K562 (cell line): ENCODE measurements at regions of chr7 and their contacts with region 1.

Region 1: GRCh38 chr7:87445897-87446296 is 29.6 kb downstream of the ABCB4 start:
- DNase-seq: no peak
- ATAC-seq: no peak
- H3K4me3 ChIP-seq: no peak overlapping the region
- H3K27ac ChIP-seq: no peak overlapping the region
- H3K4me1 ChIP-seq: no peaks in the 10 kb centered on the region
- H3K27me3 ChIP-seq: no peaks in the 10 kb centered on the region
- CTCF ChIP-seq: no peak
- EP300 ChIP-seq: no peak
- POLR2A ChIP-seq: no peak
- RAD21 ChIP-seq: no peak

Region 2: GRCh38 chr7:86748843-86749719 is 696.8 kb before region 1 on chr7:
- CTCF ChIA-PET with region 1: no interaction called
- POLR2A ChIA-PET with region 1: no interaction called
- in situ Hi-C with region 1: no loop called
- intact Hi-C with region 1: loop called (anchors 10 kb)
- DNase-seq: no peak
- ATAC-seq: no peak
- H3K4me3 ChIP-seq: no peak overlapping the region
- H3K27ac ChIP-seq: no peak overlapping the region
- H3K4me1 ChIP-seq: no peaks in the 10 kb centered on the region
- H3K27me3 ChIP-seq: no peaks in the 10 kb centered on the region
- CTCF ChIP-seq: no peak
- EP300 ChIP-seq: no peak
- POLR2A ChIP-seq: no peak
- RAD21 ChIP-seq: no peak

Region 3: GRCh38 chr7:87853237-87853864 is 407.5 kb after region 1 on chr7:
- CTCF ChIA-PET with region 1: no interaction called
- POLR2A ChIA-PET with region 1: no interaction called
- in situ Hi-C with region 1: no loop called
- intact Hi-C with region 1: no loop called
- DNase-seq: no peak
- ATAC-seq: no peak
- H3K4me3 ChIP-seq: no peak overlapping the region
- H3K27ac ChIP-seq: no peak overlapping the region
- H3K4me1 ChIP-seq: no peaks in the 10 kb centered on the region; a peak in 1 of 5 replicates
- H3K27me3 ChIP-seq: no peaks in the 10 kb centered on the region
- CTCF ChIP-seq: no peak
- EP300 ChIP-seq: no peak
- POLR2A ChIP-seq: no peak
- RAD21 ChIP-seq: no peak